PC-9 (cell line): ENCODE measurements at regions of chr1 and their contacts with region 1.

Region 1: GRCh38 chr1:97668945-97669344 is 251.9 kb downstream of the DPYD start:
- DNase-seq: no peak
- H3K4me3 ChIP-seq: no peak overlapping the region
- H3K27ac ChIP-seq: no peak overlapping the region
- H3K4me1 ChIP-seq: no peaks in the 10 kb centered on the region
- H3K27me3 ChIP-seq: no peaks in the 10 kb centered on the region
- CTCF ChIP-seq: peak; percentile 58

Region 2: DNA sequence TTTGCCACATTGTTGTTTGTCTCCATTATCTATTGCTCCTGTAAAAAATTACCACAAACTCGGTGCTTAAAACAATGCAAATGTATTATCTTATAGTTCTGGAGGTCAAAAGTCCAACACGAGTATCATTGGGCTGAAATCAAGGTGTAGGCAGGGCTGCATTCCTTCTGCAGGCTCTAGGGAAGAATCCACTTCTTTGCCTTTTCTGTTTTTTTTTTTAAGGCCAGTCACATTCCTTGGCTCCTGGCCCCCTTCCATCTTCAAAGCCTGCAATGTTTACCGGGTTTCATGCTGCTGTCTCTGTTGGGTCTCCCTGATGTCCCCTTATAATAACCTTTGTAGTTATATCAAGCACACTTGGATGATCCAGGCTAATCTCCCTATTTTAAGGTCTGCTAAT is 734.7 kb before region 1 on chr1:
- CTCF ChIA-PET with region 1: no interaction called
- POLR2A ChIA-PET with region 1: interaction called, 15 read pairs
- intact Hi-C with region 1: no loop called
- DNase-seq: no peak
- H3K4me3 ChIP-seq: no peak overlapping the region
- H3K27ac ChIP-seq: no peak overlapping the region
- H3K4me1 ChIP-seq: no peaks in the 10 kb centered on the region
- H3K27me3 ChIP-seq: no peaks in the 10 kb centered on the region
- CTCF ChIP-seq: no peak